T-cell (primary cell): ENCODE measurements at regions of chr11 and their contacts with region 1.

Region 1: DNA sequence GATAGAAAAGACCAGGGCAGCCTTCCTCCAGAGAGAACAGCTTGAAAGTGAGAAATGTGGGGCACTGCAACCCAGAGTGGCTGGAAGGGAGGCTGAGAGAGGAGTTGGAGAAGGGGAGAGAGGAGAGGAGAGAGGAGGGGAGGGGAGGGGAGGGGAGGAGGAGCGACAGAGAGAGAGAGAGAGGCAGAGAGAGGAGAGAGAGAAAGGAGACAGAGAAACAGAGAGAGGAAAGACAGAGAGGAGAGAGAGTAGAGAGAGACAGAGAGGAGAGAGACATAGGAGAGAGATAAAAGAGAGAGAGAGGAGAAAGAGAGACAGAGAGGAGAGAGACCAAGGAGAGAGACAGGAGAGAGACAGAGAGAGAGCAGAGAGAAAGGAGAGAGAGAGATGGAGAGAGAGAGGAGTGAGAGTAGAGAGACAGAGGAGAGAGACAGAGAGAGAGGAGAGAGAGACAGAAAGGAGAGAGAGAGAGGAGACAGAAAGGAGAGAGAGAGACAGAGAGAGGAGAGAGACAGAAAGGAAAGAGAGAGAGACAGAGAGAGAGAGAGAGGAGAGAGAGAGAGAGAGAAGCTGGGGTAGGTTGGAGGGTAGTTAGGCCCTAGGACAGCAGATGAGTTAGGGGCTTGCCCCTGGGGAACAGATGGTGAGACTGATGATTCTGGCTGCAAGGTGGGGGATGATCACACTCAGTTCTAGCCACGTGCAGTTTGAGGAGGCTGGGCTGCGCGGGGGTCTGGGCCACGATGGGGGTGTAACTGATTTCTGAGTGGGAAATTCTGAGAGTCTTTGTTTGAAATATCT is 8.5 kb upstream of the SCYL1 start:
- DNase-seq: no peak
- ATAC-seq: peak in 3 of 4 experiments; percentile 23 to 29 (median 24)
- H3K4me3 ChIP-seq: no peak overlapping the region
- H3K4me3 Mint-ChIP-seq: no peak overlapping the region
- H3K27ac ChIP-seq: no peak overlapping the region
- H3K27ac Mint-ChIP-seq: peak overlapping the region; percentile 57 to 64
- H3K4me1 ChIP-seq: no peaks in the 10 kb centered on the region
- H3K4me1 Mint-ChIP-seq: peaks cover 6 to 11% (median 9%) of the 10 kb centered on the region in 3 donors
- H3K27me3 ChIP-seq: no peaks in the 10 kb centered on the region
- H3K27me3 Mint-ChIP-seq: no peaks in the 10 kb centered on the region

Region 2: GRCh38 chr11:65352783-65353182 is 163.6 kb before region 1 on chr11:
- CTCF ChIA-PET with region 1: interaction called in 1 of 2 experiments, 10 read pairs
- POLR2A ChIA-PET with region 1: no interaction called
- DNase-seq: no peak
- ATAC-seq: no peak
- H3K4me3 ChIP-seq: no peak overlapping the region
- H3K4me3 Mint-ChIP-seq: no peak overlapping the region
- H3K27ac ChIP-seq: no peak overlapping the region
- H3K27ac Mint-ChIP-seq: peak overlapping the region; percentile 79 to 80
- H3K4me1 ChIP-seq: peaks cover 2 to 20% of the 10 kb centered on the region in 2 experiments
- H3K4me1 Mint-ChIP-seq: peaks cover 14 to 21% (median 18%) of the 10 kb centered on the region in 3 donors
- H3K27me3 ChIP-seq: peaks cover 0 to 7% of the 10 kb centered on the region in 2 experiments
- H3K27me3 Mint-ChIP-seq: no peaks in the 10 kb centered on the region

Region 3: GRCh38 chr11:65440831-65441499 is 75.4 kb before region 1 on chr11:
- CTCF ChIA-PET with region 1: interaction called in 1 of 2 experiments, 4 read pairs
- POLR2A ChIA-PET with region 1: interaction called in 1 of 2 experiments, 19 read pairs
- DNase-seq: peak in 1 of 35 experiments; percentile 15
- ATAC-seq: no peak
- H3K4me3 ChIP-seq: no peak overlapping the region
- H3K4me3 Mint-ChIP-seq: peak overlapping the region in 2 of 3 donors; percentile 47 to 56
- H3K27ac ChIP-seq: peak overlapping the region; percentile 35
- H3K27ac Mint-ChIP-seq: peak overlapping the region; percentile 85 to 88
- H3K4me1 ChIP-seq: peaks cover 0 to 45% of the 10 kb centered on the region in 2 experiments
- H3K4me1 Mint-ChIP-seq: peaks cover 66 to 76% (median 68%) of the 10 kb centered on the region in 3 donors
- H3K27me3 ChIP-seq: no peaks in the 10 kb centered on the region
- H3K27me3 Mint-ChIP-seq: no peaks in the 10 kb centered on the region